WTC11 (cell line): ENCODE measurements at regions of chr10 and their contacts with region 1.

Region 1: GRCh38 chr10:116849248-116850057 is at the start of gene ENO4:
- DNase-seq: peak; percentile 90
- ATAC-seq: peak; percentile 85
- H3K4me3 Mint-ChIP-seq: peak within 1 kb of the TSS; percentile 89
- H3K27ac Mint-ChIP-seq: peak within 1 kb of the TSS; percentile 75
- H3K4me1 Mint-ChIP-seq: peaks cover 34% of the 10 kb centered on the region
- H3K27me3 Mint-ChIP-seq: peaks cover 20% of the 10 kb centered on the region
- CTCF ChIP-seq: no peak
- total RNA-seq, gene ENO4: 0.27 to 1.1 TPM (median 0.42 TPM) in 3 replicates

Region 2: DNA sequence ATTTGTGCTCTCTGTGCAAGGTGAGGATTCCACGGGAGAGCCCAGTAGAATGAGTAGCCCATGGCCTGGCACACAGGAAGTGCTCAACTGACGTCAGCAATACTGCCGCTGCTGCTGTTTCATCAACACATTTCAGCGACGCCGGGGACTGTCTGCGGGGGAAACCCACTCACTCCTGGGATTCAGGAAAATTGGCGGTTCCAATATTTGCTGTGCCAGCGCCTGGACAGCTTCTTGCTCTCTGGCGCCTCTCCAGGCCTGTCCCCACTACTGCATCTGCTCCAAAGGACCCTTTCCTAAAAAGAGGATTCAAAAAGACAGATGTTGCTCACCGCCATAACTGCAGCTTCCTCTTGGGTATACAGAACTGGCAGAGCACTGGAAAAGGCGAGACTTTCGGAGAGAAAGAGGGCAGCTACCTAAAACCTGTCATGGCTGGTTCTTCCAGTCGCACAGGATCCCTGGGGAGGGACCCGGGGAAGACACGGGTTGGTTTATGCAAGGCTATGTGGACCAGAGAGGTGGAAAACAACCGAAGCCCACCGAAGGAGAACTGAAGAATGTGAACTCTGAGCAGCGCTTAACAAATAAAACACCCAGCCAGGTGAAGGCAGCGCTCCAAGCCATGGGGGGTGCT is 39.9 kb before region 1 on chr10:
- CTCF ChIA-PET with region 1: interaction called, 10 read pairs
- POLR2A ChIA-PET with region 1: no interaction called
- DNase-seq: peak; percentile 75
- ATAC-seq: peak; percentile 93
- H3K4me3 Mint-ChIP-seq: no peak overlapping the region
- H3K27ac Mint-ChIP-seq: no peak overlapping the region
- H3K4me1 Mint-ChIP-seq: peaks cover 19% of the 10 kb centered on the region
- H3K27me3 Mint-ChIP-seq: no peaks in the 10 kb centered on the region
- CTCF ChIP-seq: peak; percentile 89

Region 3: DNA sequence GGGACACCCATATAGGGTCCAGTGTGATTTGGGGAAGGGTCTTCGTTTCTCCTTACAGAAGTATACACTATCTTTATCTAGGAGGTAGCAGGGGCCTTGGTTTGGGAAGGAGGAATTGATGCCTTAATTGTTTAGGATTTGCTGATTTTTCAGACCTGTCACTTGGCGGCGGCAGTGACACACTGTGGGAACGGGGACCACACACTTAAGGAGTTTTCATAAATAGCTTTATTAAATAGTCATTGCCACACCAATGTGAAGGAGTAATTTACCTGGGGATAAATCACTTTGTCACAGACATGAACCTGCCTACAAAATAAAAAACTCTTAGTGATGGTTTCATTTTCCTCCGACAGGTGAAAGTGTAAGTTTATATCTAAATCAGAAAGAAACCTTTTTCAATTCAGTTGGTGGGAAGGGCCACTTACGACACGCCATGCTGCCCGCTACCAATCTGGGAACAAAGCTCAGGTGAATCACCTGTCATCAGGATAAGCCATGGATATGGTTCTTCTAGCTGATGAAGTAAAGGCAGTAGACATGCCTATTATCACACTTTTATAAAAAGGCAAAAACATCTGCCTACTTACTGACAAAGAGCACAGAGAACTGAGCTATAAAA is 12.4 kb before region 1 on chr10:
- CTCF ChIA-PET with region 1: interaction called, 16 read pairs
- POLR2A ChIA-PET with region 1: interaction called, 15 read pairs
- DNase-seq: no peak
- ATAC-seq: no peak
- H3K4me3 Mint-ChIP-seq: no peak overlapping the region
- H3K27ac Mint-ChIP-seq: peak overlapping the region; percentile 52; the same call in 1 of the 2 replicates
- H3K4me1 Mint-ChIP-seq: peaks cover 76% of the 10 kb centered on the region
- H3K27me3 Mint-ChIP-seq: peaks cover 4% of the 10 kb centered on the region; the same call in 1 of the 2 replicates
- CTCF ChIP-seq: no peak